SK-N-SH (cell line): ENCODE measurements at regions of chr6 and their contacts with region 1.

Region 1: GRCh38 chr6:160137989-160138835 is 16.6 kb downstream of the SLC22A1 start:
- DNase-seq: peak; percentile 54
- H3K4me3 ChIP-seq: peak overlapping the region in 1 of 2 experiments; percentile 6; a peak in 1 of 4 replicates
- H3K27ac ChIP-seq: no peak overlapping the region
- H3K4me1 ChIP-seq: peaks cover 0 to 5% of the 10 kb centered on the region in 2 experiments; a peak in 1 of 4 replicates
- H3K27me3 ChIP-seq: no peaks in the 10 kb centered on the region
- CTCF ChIP-seq: peak; percentile 78
- EP300 ChIP-seq: no peak
- RAD21 ChIP-seq: peak; percentile 73

Region 2: DNA sequence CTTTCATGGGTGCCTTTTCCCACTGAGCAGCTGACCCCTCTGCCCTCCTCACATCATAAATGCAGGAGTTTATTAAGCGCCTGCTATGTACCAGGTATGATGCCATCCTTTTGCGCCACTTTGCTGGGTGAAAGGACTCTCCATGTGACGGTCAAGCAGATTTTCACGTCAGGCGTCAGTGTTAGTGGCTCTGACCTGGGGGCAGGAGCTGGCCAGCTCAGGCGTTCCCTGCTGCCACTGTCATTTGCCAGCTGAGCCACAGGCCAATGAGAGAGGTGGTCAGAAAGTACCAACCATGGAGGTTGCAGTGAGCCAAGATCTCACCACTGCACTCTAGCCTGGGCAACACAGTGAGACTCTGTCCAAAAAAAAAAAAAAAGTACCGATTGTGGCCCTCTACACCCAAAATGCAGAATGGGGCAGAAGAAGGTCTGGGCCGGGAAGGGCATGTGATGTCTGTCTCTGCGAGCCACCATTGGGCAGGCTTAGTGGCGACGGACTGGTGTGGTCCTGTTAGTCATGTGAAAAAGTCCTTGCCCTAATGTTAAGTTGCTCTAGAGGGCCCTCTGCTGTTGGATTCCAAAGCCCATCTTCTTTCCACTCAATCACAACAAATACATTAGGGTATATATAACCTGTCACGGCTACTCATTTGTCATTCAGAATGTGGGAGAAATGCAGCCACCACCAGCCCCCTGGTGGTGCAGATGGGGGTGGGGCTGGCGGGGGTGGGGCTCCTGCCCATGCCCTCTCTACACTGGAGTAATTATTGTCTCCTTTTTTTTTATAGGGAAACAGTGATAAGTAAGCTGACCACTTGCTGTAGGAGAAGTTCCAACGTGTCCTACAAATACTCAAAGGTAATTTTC is 35.0 kb before region 1 on chr6:
- CTCF ChIA-PET with region 1: no interaction called
- POLR2A ChIA-PET with region 1: no interaction called
- DNase-seq: peak; percentile 45
- H3K4me3 ChIP-seq: no peak overlapping the region; a peak in 1 of 4 replicates
- H3K27ac ChIP-seq: no peak overlapping the region
- H3K4me1 ChIP-seq: no peaks in the 10 kb centered on the region
- H3K27me3 ChIP-seq: no peaks in the 10 kb centered on the region
- CTCF ChIP-seq: peak; percentile 59
- EP300 ChIP-seq: no peak
- RAD21 ChIP-seq: peak; percentile 30

Region 3: DNA sequence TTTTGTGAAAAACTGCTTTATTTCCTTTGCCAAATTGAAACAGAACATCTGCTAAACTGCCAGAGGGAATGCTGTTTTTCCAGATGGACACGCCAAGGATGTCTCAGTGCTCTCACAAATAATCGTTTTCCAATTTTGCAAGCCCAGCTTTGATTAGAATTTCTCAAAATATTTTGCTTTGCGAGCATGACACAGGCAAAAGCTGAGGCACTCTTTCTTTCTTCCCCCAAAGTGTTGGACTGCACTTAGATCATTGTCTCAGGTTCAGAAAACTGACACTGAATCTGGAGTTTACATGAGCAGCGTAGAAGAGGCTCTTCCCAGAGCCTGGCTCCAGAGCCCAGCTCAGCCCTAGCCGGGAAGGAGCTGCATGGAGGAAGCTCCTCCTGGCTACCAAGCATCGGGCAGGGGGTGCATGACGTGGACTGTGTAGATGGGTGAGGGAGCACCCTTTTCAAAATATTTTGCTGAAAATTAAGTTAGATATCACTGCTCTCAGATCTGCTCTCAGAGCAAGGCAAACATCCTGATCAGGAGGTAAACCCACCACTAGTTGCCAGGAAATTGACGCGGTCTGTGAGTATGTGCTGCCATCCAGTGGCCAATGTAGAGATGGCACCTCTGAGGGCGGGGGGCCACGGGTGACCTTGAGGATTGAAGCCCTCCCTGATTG is 317.5 kb after region 1 on chr6:
- CTCF ChIA-PET with region 1: interaction called, 25 read pairs
- POLR2A ChIA-PET with region 1: no interaction called
- DNase-seq: peak; percentile 64
- H3K4me3 ChIP-seq: peak overlapping the region in 1 of 2 experiments; percentile 11; a peak in 1 of 4 replicates
- H3K27ac ChIP-seq: no peak overlapping the region
- H3K4me1 ChIP-seq: peaks cover 0 to 2% of the 10 kb centered on the region in 2 experiments; a peak in 1 of 4 replicates
- H3K27me3 ChIP-seq: peaks cover 17% of the 10 kb centered on the region; the same call in 1 of the 2 replicates
- CTCF ChIP-seq: peak; percentile 98
- EP300 ChIP-seq: no peak
- RAD21 ChIP-seq: peak; percentile 88